CD8-positive, alpha-beta T cell (primary cell): ENCODE measurements at regions of chr5 and their contacts with region 1.

Region 1: DNA sequence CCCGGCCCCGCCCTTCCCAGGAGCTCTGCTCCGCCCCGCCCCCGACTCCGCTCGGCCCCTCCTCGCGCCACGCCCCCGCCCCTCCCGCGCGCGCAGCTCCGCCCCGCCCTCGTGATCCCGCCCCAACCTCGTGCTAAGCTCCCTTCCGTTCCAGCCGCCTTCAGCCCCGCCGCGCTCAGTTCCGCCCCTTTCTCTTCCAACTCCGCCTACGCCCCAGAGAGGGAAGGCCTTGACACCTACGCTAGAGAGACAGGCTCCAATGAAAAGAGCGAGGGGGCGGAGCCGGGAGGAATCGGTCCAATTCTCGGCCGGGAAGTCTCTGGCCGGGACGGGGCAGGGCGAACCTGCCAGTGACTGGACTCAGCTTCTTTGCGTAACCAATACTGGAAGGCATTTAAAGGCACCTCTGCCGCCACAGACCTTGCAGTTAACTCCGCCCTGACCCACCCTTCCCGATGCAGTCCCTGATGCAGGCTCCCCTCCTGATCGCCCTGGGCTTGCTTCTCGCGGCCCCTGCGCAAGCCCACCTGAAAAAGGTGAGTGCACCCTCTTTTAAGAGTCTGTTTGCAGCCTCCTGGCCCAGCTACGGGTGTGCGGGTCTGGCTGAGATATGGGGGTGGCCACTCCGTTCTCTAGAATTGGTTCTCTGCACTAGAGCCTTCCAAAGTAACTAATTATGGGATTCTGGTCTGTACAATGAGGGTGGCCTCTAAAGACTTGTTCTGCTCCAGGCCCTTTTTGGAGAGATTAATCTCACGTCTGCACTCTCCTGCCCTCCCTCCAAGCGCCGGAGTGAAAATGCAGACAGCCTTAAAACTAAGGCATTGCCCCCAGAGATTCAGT is at the start of gene GM2A:
- DNase-seq: peak; percentile 95 to 99 (median 98)
- ATAC-seq: peak; percentile 97
- H3K4me3 ChIP-seq: peak within 1 kb of the TSS; percentile 81 to 82
- H3K4me3 Mint-ChIP-seq: peak within 1 kb of the TSS; percentile 92
- H3K27ac ChIP-seq: peak within 1 kb of the TSS; percentile 57 to 77
- H3K27ac Mint-ChIP-seq: peak within 1 kb of the TSS; percentile 93
- H3K4me1 ChIP-seq: peaks cover 25% of the 10 kb centered on the region
- H3K4me1 Mint-ChIP-seq: peaks cover 45% of the 10 kb centered on the region
- H3K27me3 ChIP-seq: no peaks in the 10 kb centered on the region
- H3K27me3 Mint-ChIP-seq: no peaks in the 10 kb centered on the region
- CTCF ChIP-seq: no peak
- total RNA-seq, gene GM2A: 3.4 to 5.0 TPM

Region 2: DNA sequence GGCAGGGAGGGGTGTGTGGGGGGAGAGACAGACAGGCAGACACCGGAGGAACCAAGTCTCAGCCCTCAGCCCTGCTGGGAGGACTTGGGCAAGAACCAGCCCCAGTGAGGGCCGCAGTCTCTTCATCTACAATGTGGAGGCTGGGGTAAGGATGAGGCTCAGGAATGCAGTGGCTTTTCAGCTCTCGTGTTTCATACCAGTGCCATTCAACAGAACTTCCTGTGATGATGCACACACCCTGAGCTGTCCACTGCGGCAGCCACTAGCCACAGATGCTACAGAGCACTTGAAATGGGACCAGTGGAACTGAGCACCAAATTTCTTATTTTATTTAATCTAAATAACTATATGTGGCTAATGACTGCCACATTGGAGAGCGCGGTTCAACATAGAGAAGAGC is 974.1 kb before region 1 on chr5:
- CTCF ChIA-PET with region 1: no interaction called
- POLR2A ChIA-PET with region 1: no interaction called
- intact Hi-C with region 1: no loop called
- DNase-seq: no peak
- ATAC-seq: no peak
- H3K4me3 ChIP-seq: no peak overlapping the region
- H3K4me3 Mint-ChIP-seq: no peak overlapping the region
- H3K27ac ChIP-seq: no peak overlapping the region
- H3K27ac Mint-ChIP-seq: no peak overlapping the region
- H3K4me1 ChIP-seq: no peaks in the 10 kb centered on the region
- H3K4me1 Mint-ChIP-seq: no peaks in the 10 kb centered on the region
- H3K27me3 ChIP-seq: no peaks in the 10 kb centered on the region
- H3K27me3 Mint-ChIP-seq: peaks cover 12% of the 10 kb centered on the region
- CTCF ChIP-seq: no peak

Region 3: GRCh38 chr5:150357326-150358260 is 895.4 kb before region 1 on chr5 and contains the start of gene TCOF1:
- CTCF ChIA-PET with region 1: no interaction called
- POLR2A ChIA-PET with region 1: no interaction called
- intact Hi-C with region 1: loop called (anchors 2 to 5 kb)
- DNase-seq: peak; percentile 93 to 99 (median 97)
- ATAC-seq: peak; percentile 99
- H3K4me3 ChIP-seq: peak within 1 kb of the TSS; percentile 62 to 74
- H3K4me3 Mint-ChIP-seq: peak within 1 kb of the TSS; percentile 82
- H3K27ac ChIP-seq: peak within 1 kb of the TSS; percentile 52 to 70
- H3K27ac Mint-ChIP-seq: peak within 1 kb of the TSS; percentile 87
- H3K4me1 ChIP-seq: peaks cover 18% of the 10 kb centered on the region
- H3K4me1 Mint-ChIP-seq: peaks cover 46% of the 10 kb centered on the region
- H3K27me3 ChIP-seq: no peaks in the 10 kb centered on the region
- H3K27me3 Mint-ChIP-seq: no peaks in the 10 kb centered on the region
- CTCF ChIP-seq: no peak
- total RNA-seq, gene TCOF1: 36.5 to 38.7 TPM

Region 4: GRCh38 chr5:150656191-150657132 is 596.5 kb before region 1 on chr5:
- CTCF ChIA-PET with region 1: no interaction called
- POLR2A ChIA-PET with region 1: no interaction called
- intact Hi-C with region 1: loop called in 1 of 2 experiments (anchors 2 kb)
- DNase-seq: peak; percentile 61 to 90 (median 80)
- ATAC-seq: peak; percentile 93
- H3K4me3 ChIP-seq: peak overlapping the region; percentile 51 to 63
- H3K4me3 Mint-ChIP-seq: peak overlapping the region; percentile 78
- H3K27ac ChIP-seq: no peak overlapping the region
- H3K27ac Mint-ChIP-seq: no peak overlapping the region
- H3K4me1 ChIP-seq: peaks cover 6% of the 10 kb centered on the region
- H3K4me1 Mint-ChIP-seq: peaks cover 4% of the 10 kb centered on the region
- H3K27me3 ChIP-seq: no peaks in the 10 kb centered on the region
- H3K27me3 Mint-ChIP-seq: no peaks in the 10 kb centered on the region
- CTCF ChIP-seq: peak; percentile 53

Region 5: DNA sequence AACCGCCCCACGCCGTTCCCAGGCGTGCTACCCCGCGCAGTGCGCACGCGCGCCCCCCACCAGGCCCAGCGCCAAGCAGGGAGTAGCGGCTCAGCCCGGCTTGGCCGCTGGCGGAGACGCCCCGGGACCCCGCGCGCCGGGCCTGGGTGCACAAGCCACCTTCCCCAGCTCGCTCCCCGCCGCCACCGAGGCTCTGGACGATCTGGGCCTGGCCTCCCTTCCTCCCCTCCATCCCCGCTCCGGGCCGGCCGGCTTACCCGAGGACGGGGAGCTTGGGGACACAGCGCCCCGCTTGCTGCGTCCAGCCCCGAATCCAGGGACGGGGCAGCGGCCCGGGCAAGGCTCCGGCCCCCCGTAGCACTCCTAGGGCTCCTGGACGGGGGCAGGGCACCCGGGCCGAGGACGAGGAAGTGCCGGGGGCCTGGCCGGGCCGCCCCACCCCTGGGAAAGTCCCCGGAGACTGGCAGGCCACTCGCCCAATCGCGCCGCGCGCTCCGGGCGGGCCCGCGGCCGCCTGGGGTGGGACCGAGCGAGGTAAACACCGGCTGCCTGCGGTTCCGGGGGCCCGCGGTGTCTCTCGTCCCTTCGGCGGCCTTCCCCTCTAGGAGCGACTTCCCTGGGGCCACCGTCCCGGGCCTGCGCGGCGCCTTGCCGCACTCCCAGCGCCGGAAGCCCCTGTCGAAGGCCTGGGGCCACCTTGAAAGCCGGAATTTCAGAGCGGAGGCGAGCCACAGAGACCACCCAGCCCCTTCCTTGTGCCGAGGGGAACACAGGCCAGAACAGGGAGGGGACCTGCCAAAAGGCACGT is 172.2 kb before region 1 on chr5 and contains the start of gene TNIP1:
- CTCF ChIA-PET with region 1: no interaction called
- POLR2A ChIA-PET with region 1: interaction called, 5 read pairs
- intact Hi-C with region 1: loop called (anchors 1 to 5 kb)
- DNase-seq: peak; percentile 87 to 97 (median 94)
- ATAC-seq: peak; percentile 84
- H3K4me3 ChIP-seq: peak within 1 kb of the TSS; percentile 76
- H3K4me3 Mint-ChIP-seq: peak within 1 kb of the TSS; percentile 93
- H3K27ac ChIP-seq: peak within 1 kb of the TSS; percentile 70 to 98
- H3K27ac Mint-ChIP-seq: peak within 1 kb of the TSS; percentile 95
- H3K4me1 ChIP-seq: peaks cover 56% of the 10 kb centered on the region
- H3K4me1 Mint-ChIP-seq: peaks cover 80% of the 10 kb centered on the region
- H3K27me3 ChIP-seq: no peaks in the 10 kb centered on the region
- H3K27me3 Mint-ChIP-seq: no peaks in the 10 kb centered on the region
- CTCF ChIP-seq: no peak
- total RNA-seq, gene TNIP1: 133 to 134 TPM

Region 6: DNA sequence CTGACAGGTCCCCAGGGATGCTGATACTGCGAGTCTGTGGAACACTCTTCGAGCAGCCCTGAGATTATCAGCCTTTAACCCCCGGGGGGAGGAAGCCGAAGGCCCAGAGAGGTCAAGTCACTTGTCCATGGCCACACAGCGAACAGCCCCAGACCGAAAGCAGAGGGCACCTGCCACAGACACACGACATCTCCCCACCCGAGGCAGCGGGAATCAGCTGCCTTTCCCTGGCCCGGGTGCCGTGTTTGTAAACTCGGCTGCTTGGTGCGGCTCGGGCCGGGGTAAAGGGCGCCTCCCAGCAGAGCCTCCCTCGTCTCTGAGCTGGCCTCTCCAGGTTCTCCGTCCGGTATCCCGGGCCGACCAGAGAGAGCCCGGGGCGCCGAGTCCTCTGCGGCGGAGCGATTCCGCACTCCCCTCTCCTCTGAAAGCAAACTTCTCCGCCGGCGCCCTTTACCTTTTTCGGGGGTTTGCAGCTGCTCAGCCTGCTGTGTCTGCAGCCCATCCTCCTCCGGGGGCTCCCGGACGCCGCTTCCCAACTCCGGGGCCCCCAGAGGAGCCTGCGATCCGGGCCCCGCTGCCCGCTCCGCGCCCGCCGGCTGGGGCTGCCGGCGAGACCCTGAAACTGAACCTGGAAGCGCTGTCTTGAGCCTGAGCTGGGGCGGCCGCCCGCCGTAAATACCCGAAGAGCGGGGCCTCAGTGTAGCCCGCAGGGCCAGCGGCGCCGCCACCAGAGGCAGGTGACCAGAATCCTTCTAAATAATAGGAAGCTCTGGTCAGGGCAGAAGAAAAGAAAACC is 29.3 kb before region 1 on chr5 and contains the start of gene CCDC69:
- CTCF ChIA-PET with region 1: interaction called, 3 read pairs
- POLR2A ChIA-PET with region 1: interaction called, 16 read pairs
- intact Hi-C with region 1: loop called (anchors 1 to 2 kb)
- DNase-seq: peak in 8 of 9 experiments; percentile 34 to 78 (median 58)
- ATAC-seq: peak; percentile 47
- H3K4me3 ChIP-seq: peak within 1 kb of the TSS; percentile 67 to 95
- H3K4me3 Mint-ChIP-seq: peak within 1 kb of the TSS; percentile 89
- H3K27ac ChIP-seq: peak within 1 kb of the TSS; percentile 69 to 86
- H3K27ac Mint-ChIP-seq: peak within 1 kb of the TSS; percentile 96
- H3K4me1 ChIP-seq: peaks cover 58% of the 10 kb centered on the region
- H3K4me1 Mint-ChIP-seq: peaks cover 58% of the 10 kb centered on the region
- H3K27me3 ChIP-seq: no peaks in the 10 kb centered on the region
- H3K27me3 Mint-ChIP-seq: no peaks in the 10 kb centered on the region
- CTCF ChIP-seq: no peak
- total RNA-seq, gene CCDC69: 96.3 to 98.5 TPM

Region 7: GRCh38 chr5:151758430-151759241 is 505.7 kb after region 1 on chr5 and contains the start of gene ATOX1:
- CTCF ChIA-PET with region 1: no interaction called
- POLR2A ChIA-PET with region 1: no interaction called
- intact Hi-C with region 1: loop called in 1 of 2 experiments (anchors 5 kb)
- DNase-seq: peak; percentile 82 to 94 (median 90)
- ATAC-seq: peak; percentile 99
- H3K4me3 ChIP-seq: peak within 1 kb of the TSS; percentile 61 to 91
- H3K4me3 Mint-ChIP-seq: peak within 1 kb of the TSS; percentile 95
- H3K27ac ChIP-seq: peak within 1 kb of the TSS; percentile 60 to 70
- H3K27ac Mint-ChIP-seq: peak within 1 kb of the TSS; percentile 94
- H3K4me1 ChIP-seq: peaks cover 26% of the 10 kb centered on the region
- H3K4me1 Mint-ChIP-seq: peaks cover 35% of the 10 kb centered on the region
- H3K27me3 ChIP-seq: no peaks in the 10 kb centered on the region
- H3K27me3 Mint-ChIP-seq: no peaks in the 10 kb centered on the region
- CTCF ChIP-seq: no peak
- total RNA-seq, gene ATOX1: 12.6 to 13.2 TPM